ENCODE measurements at regions of chr15 and their contacts with region 1.

Region 1: DNA sequence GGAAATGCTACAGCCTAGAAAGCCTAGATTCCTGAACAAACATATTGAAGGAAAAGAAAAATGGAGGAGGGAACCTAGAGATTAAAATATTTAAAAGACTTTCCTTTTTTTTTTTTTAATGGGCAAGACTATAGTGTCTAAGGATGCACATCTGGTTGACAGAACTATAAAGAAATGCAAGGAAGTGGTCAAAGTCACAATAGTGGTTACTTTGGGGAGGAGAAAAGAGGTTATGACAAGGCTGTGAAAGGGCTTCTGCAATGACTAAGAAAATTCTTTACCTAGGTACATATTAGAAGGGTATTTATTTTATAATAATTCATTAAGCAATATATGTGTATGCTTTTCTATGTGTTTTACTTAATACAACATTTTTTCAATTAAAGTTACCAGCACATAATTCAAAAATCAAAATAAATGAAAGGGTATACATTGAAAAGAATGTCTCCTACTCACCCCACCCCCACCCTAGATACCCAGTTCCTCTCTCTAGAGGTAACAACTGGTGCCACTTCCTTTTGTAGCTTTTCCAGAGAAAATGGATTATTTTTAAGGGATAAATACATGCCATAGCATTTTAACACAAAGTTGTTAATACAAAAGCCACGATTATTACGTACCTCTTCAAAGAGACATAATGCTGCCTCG is 70.1 kb downstream of the HERC1 start:
- DNase-seq: peak in 2 of 14 experiments; percentile 17 to 70
- ATAC-seq: peak; percentile 58
- H3K4me3 ChIP-seq: no peak overlapping the region
- H3K4me3 Mint-ChIP-seq: no peak overlapping the region
- H3K27ac ChIP-seq: no peak overlapping the region
- H3K27ac Mint-ChIP-seq: no peak overlapping the region
- H3K4me1 ChIP-seq: peaks cover 22% of the 10 kb centered on the region
- H3K4me1 Mint-ChIP-seq: peaks cover 79% of the 10 kb centered on the region
- H3K27me3 ChIP-seq: no peaks in the 10 kb centered on the region
- H3K27me3 Mint-ChIP-seq: no peaks in the 10 kb centered on the region
- CTCF ChIP-seq: no peak

Region 2: GRCh38 chr15:63449731-63450130 is 313.9 kb before region 1 on chr15:
- CTCF ChIA-PET with region 1: no interaction called
- POLR2A ChIA-PET with region 1: no interaction called
- intact Hi-C with region 1: no loop called
- DNase-seq: no peak
- ATAC-seq: no peak
- H3K4me3 ChIP-seq: no peak overlapping the region
- H3K4me3 Mint-ChIP-seq: no peak overlapping the region
- H3K27ac ChIP-seq: no peak overlapping the region
- H3K27ac Mint-ChIP-seq: no peak overlapping the region
- H3K4me1 ChIP-seq: peaks cover 21% of the 10 kb centered on the region
- H3K4me1 Mint-ChIP-seq: peaks cover 18% of the 10 kb centered on the region
- H3K27me3 ChIP-seq: no peaks in the 10 kb centered on the region
- H3K27me3 Mint-ChIP-seq: no peaks in the 10 kb centered on the region
- CTCF ChIP-seq: no peak

Region 3: GRCh38 chr15:63805993-63806980 is 42.7 kb after region 1 on chr15:
- CTCF ChIA-PET with region 1: no interaction called
- POLR2A ChIA-PET with region 1: interaction called, 4 read pairs
- intact Hi-C with region 1: loop called in 1 of 2 experiments (anchors 5 kb)
- DNase-seq: peak in 2 of 14 experiments; percentile 17 to 34
- ATAC-seq: peak; percentile 52
- H3K4me3 ChIP-seq: no peak overlapping the region
- H3K4me3 Mint-ChIP-seq: peak overlapping the region; percentile 26
- H3K27ac ChIP-seq: no peak overlapping the region
- H3K27ac Mint-ChIP-seq: peak overlapping the region; percentile 56
- H3K4me1 ChIP-seq: peaks cover 37% of the 10 kb centered on the region
- H3K4me1 Mint-ChIP-seq: peaks cover 98% of the 10 kb centered on the region
- H3K27me3 ChIP-seq: no peaks in the 10 kb centered on the region
- H3K27me3 Mint-ChIP-seq: no peaks in the 10 kb centered on the region
- CTCF ChIP-seq: no peak

Region 4: GRCh38 chr15:63826528-63826927 is 62.9 kb after region 1 on chr15:
- CTCF ChIA-PET with region 1: no interaction called
- POLR2A ChIA-PET with region 1: no interaction called
- intact Hi-C with region 1: loop called in 1 of 2 experiments (anchors 5 kb)
- DNase-seq: peak in 4 of 14 experiments; percentile 45 to 75 (median 66)
- ATAC-seq: no peak
- H3K4me3 ChIP-seq: no peak overlapping the region
- H3K4me3 Mint-ChIP-seq: peak overlapping the region; percentile 74
- H3K27ac ChIP-seq: no peak overlapping the region
- H3K27ac Mint-ChIP-seq: peak overlapping the region; percentile 62
- H3K4me1 ChIP-seq: peaks cover 21% of the 10 kb centered on the region
- H3K4me1 Mint-ChIP-seq: peaks cover 91% of the 10 kb centered on the region
- H3K27me3 ChIP-seq: no peaks in the 10 kb centered on the region
- H3K27me3 Mint-ChIP-seq: no peaks in the 10 kb centered on the region
- CTCF ChIP-seq: peak; percentile 62

Measured in CD4-positive, alpha-beta T cell (primary cell).